ENCODE measurements at regions of chr7 and their contacts with region 1.

Region 1: DNA sequence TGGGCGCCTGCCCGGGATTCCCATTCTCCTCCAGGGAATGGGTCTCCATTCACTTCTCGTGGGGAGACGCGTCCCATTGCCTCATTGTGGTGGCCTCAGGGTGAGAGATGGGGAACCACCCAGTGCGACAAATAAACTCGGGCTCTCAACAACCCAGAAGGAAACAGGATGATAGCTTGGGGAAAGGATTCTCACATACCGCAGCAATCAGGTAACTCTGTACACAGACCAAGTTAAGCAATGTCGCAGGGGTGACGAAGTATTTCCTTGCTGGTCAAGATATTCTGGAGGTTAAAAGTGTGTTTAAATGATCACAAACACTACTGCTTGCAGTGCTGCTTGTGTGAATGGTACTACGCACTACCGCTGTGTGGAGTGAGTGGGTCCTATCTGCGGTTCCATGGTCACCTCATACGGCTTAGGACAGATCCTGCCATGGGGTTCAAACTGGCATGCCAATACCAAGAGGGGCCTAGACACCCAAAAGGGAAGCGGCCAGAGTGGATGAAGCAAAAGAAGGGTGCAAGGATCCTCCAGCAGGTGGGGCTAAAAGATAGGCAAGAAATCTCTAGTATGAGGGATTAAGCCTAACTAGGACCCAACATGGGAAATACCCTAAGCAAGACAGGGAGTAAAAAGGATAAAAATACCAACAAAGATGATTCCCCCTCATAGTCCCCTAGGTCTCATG is 143.8 kb upstream of the TMEM106B start:
- DNase-seq: peak; percentile 61
- H3K4me3 ChIP-seq: no peak overlapping the region
- H3K27ac ChIP-seq: no peak overlapping the region
- H3K4me1 ChIP-seq: no peaks in the 10 kb centered on the region
- H3K27me3 ChIP-seq: no peaks in the 10 kb centered on the region
- CTCF ChIP-seq: peak; percentile 35 to 67 (median 60)
- EP300 ChIP-seq: no peak
- POLR2A ChIP-seq: no peak

Region 2: GRCh38 chr7:12322284-12322902 is 255.1 kb after region 1 on chr7:
- intact Hi-C with region 1: loop called (anchors 1 kb)
- DNase-seq: no peak
- H3K4me3 ChIP-seq: no peak overlapping the region
- H3K27ac ChIP-seq: no peak overlapping the region
- H3K4me1 ChIP-seq: no peaks in the 10 kb centered on the region
- H3K27me3 ChIP-seq: no peaks in the 10 kb centered on the region
- CTCF ChIP-seq: peak; percentile 13 to 63 (median 38)
- EP300 ChIP-seq: no peak
- POLR2A ChIP-seq: no peak

Region 3: DNA sequence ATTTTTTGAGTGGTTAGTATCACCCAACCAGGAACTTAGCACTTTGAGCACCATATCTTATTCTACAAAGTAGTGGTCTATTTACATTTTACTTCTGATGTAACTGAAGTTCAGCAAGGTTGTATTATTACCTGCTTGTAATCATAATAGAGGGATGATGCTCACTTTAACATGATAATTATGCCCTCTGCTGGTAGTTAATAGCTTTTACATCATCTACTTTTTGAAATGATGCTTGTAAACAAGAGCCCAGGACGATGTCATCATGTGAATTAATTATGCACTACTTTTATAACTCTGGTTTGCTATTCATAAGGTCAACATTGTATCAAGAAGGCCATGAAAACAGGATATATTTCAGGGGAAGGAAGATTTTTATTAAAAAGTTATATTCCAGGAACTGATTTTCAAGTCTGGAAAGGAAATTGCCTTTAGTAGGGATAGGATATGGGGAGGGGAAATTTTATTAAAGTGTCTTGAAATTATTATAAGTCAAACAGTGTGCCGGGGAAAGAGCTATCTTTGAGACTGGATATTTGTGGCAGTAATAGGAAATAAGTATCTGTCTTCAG is 422.9 kb after region 1 on chr7:
- intact Hi-C with region 1: loop called (anchors 10 kb)
- DNase-seq: no peak
- H3K4me3 ChIP-seq: no peak overlapping the region
- H3K27ac ChIP-seq: no peak overlapping the region
- H3K4me1 ChIP-seq: no peaks in the 10 kb centered on the region
- H3K27me3 ChIP-seq: no peaks in the 10 kb centered on the region
- CTCF ChIP-seq: peak in 1 of 4 experiments; percentile 28
- EP300 ChIP-seq: no peak
- POLR2A ChIP-seq: no peak

Measured in sigmoid colon (tissue), 7 donors.